ENCODE measurements at regions of chr19 and their contacts with region 1.

Region 1: DNA sequence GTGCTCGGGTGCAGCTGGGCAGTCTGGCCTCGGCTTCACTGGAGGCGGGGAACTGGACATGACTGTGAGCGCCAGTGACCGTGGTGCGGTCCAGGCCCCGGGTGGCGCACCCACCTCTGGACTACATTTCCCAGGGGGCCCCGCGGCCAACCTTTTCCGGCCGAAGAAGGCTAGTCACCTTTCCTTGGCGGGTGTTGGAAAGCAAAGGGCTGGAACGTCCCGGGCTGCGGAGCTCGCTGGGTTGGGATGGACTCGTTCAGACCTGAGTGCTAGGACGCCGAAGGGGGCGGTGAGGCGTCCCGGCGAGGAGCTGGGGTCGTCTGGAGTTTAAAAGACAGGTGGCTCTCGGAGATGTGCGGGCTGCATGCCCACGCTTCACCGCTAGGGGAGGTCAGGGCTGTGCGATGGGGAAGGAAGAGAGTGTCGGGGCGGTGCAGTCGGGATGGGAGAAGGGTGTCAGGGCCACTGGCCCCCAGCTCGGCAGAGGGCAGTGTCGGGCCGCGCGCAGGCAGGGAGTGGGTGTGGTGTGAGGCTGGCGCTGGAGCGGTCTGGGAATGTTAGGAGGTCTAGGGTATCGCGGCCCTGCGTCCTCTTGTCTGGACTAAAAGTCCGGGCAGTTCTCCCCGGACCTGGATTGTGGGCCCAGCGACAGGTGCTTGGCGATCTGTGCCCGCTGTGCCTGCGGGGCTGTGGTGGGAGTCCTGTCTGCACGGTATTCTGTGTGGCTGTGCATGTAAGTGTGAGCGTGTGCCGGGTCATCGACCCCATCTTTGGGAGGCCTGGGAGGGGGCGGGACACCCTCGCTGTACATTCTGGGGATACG is 57.1 kb downstream of the ZNF568 start:
- DNase-seq: peak; percentile 93 to 96
- ATAC-seq: peak; percentile 99
- H3K4me3 ChIP-seq: peak overlapping the region; percentile 63 to 75
- H3K27ac ChIP-seq: peak overlapping the region in 1 of 2 donors; percentile 74
- H3K4me1 ChIP-seq: no peaks in the 10 kb centered on the region
- H3K27me3 ChIP-seq: no peaks in the 10 kb centered on the region

Region 2: DNA sequence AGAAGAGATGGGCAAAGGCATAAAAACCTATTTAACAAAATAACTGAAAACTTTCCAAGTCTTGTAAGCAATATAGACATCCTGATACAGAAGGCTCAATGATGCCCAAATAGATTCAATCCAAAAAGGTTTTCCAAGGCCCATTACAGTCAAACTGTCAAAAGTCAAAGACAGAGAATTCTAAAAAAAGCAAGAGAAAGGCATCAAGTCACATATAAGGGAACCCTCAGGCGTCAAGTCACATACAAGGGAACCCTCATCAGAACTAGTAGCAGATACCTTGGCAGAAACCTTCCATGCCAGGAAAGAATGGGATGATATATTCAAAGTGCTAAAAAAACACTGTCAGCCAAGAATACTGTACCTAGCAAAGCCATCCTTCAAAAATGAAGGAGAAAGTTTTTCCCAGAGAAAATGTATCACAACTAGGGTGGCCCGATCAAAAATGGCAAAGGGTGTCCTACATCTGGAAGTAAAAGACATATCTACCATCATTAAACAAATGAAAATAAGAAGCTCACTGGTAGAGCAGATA is 78.3 kb before region 1 on chr19:
- intact Hi-C with region 1: no loop called
- DNase-seq: no peak
- ATAC-seq: no peak
- H3K4me3 ChIP-seq: no peak overlapping the region
- H3K27ac ChIP-seq: no peak overlapping the region
- H3K4me1 ChIP-seq: no peaks in the 10 kb centered on the region
- H3K27me3 ChIP-seq: no peaks in the 10 kb centered on the region

Region 3: GRCh38 chr19:36915992-36916830 is 57.0 kb before region 1 on chr19 and contains the starts of genes ZNF568 and ZNF829:
- intact Hi-C with region 1: loop called in 1 of 2 experiments (anchors 5 kb)
- DNase-seq: peak; percentile 94 to 97
- ATAC-seq: peak; percentile 96
- H3K4me3 ChIP-seq: peak within 1 kb of the TSS; percentile 77 to 81
- H3K27ac ChIP-seq: peak within 1 kb of the TSS; percentile 45 to 97
- H3K4me1 ChIP-seq: no peaks in the 10 kb centered on the region
- H3K27me3 ChIP-seq: no peaks in the 10 kb centered on the region
- total RNA-seq, gene ZNF568: 14.0 to 15.8 TPM
- total RNA-seq, gene ZNF829: 3.1 to 3.5 TPM

Region 4: DNA sequence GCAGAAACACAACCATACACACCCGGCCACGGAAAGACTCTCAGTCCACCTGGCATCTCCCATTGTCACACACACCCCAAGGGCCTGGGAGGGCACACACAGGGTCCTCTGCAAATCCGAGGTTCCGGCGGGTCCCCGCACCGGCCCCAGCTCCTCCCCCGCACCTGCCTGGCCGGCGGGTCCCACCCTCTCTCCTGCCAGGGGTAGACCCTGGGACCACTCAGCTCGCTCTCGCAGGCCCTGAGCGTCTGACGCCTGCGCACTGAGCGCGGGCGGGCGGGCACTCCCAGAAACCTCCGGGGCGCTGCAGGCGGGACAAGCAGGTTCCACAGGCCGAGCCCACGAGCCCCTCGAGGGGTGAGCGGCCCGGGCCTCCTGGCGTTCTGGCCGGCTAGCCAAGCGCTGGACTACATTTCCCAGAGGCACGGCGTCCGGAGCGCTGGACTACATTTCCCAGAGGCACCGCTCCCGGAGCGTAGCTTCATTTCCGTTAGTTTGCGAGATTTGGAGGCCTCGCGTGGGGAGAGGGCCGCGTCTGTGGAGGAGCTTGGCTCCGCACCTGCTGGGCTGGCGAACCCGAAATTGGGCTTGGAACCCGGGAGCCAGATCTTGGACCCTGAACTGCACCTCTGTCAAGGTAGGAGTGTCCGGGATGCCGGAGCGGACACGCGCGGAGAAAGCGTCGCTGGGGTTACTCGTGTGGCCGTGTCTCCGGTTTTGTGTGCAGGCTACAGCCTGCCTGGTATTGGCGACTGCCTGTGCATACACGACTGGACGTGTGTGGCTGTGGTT is 104.9 kb after region 1 on chr19 and contains the start of gene ZNF420:
- intact Hi-C with region 1: loop called in 1 of 2 experiments (anchors 5 kb)
- DNase-seq: peak; percentile 96 to 97
- ATAC-seq: peak; percentile 100
- H3K4me3 ChIP-seq: peak within 1 kb of the TSS; percentile 46 to 91
- H3K27ac ChIP-seq: peak within 1 kb of the TSS in 1 of 2 donors; percentile 55
- H3K4me1 ChIP-seq: peaks cover 4 to 7% of the 10 kb centered on the region in 2 donors
- H3K27me3 ChIP-seq: no peaks in the 10 kb centered on the region
- total RNA-seq, gene ZNF420: 9.2 to 11.8 TPM

Region 5: DNA sequence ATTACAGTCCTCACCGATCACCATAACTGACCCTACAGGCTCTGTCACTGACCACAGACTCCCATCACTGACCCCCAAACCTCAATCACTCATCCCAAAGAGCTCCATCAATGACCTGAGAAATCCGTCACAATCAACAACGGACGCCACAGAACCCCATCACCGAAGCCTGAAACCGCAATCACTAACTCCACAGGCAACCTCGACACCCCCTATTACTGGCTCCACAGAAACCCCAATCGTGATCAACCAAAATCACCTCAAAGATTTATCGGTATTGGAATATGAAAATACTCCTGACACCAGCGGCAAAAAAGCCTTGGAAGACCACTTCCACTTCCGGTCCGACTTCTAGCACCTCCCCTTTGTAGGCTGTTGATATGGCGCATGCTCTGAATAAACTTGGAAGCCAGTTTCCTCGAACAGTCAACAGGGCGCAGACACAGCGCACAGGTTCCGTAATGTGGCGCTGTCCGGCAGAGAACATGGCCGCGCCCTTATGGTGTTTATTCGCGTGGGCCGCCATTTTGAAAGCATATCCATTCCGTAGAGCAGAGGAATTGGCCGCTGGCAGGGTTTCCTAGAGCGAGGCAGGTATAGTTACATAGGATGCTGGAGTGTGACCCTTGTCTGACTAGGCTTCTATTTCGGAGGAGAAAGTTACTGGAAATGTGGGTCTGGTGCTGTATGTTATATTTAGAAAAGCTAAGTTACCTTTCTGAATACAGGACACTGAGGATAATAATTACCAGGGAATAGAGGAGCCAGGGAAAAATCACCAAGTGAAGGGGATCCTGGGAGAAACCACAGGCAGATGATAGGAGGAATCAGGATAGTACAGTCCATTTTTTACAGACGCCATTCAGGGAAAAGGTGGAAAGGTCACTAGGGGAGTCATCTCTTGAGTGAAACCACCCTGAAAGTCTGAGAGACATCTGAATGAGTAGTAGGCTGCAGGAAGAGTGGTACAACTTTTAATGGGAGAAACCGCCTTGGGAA is 199.4 kb after region 1 on chr19 and contains the start of gene ZNF585A:
- intact Hi-C with region 1: loop called in 1 of 2 experiments (anchors 5 kb)
- DNase-seq: peak; percentile 95
- ATAC-seq: peak; percentile 100
- H3K4me3 ChIP-seq: peak within 1 kb of the TSS; percentile 63 to 100
- H3K27ac ChIP-seq: peak within 1 kb of the TSS in 1 of 2 donors; percentile 64
- H3K4me1 ChIP-seq: no peaks in the 10 kb centered on the region
- H3K27me3 ChIP-seq: no peaks in the 10 kb centered on the region
- total RNA-seq, gene ZNF585A: 8.6 to 15.1 TPM

Region 6: DNA sequence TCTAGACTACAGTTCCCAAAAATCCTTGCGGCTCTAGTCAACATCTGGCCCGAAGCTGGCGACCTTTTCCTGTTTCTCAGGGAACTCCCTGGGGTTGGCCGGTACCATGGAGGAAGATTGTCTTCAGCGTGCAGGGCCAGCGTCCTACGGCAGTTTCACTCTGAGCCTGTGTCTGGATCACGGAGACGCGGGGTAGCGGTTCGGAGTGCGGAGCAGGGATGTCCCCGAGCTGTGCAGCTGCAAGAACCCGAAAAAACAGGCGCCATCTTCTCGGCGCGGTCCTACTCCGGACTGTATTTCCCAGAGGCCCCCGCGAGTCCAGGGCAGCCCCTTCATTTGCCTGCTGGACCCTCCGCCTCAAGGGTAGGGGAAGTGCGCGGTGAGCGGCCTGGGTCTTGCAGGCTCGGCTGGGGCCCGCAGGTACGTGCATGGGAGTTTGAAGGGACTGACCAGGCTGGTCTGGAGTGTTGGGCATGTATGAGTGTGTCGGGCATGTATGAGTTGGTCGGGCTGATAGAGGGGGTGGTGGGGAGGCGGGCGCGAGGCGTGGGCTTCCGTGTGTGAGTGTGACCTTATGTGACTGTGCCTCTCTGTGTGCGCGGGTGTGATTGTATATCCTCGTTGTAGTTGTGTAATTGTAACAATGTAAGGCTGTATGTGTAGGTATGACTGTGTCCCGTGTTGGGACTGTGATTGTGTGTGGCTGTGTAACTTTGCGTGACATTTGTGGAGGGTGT is 244.8 kb after region 1 on chr19 and contains the start of gene ZNF383:
- intact Hi-C with region 1: loop called in 1 of 2 experiments (anchors 5 kb)
- DNase-seq: peak; percentile 92 to 95
- ATAC-seq: peak; percentile 98
- H3K4me3 ChIP-seq: peak within 1 kb of the TSS; percentile 84 to 88
- H3K27ac ChIP-seq: peak within 1 kb of the TSS in 1 of 2 donors; percentile 85
- H3K4me1 ChIP-seq: no peaks in the 10 kb centered on the region
- H3K27me3 ChIP-seq: no peaks in the 10 kb centered on the region
- total RNA-seq, gene ZNF383: 10.0 to 16.1 TPM

Region 7: DNA sequence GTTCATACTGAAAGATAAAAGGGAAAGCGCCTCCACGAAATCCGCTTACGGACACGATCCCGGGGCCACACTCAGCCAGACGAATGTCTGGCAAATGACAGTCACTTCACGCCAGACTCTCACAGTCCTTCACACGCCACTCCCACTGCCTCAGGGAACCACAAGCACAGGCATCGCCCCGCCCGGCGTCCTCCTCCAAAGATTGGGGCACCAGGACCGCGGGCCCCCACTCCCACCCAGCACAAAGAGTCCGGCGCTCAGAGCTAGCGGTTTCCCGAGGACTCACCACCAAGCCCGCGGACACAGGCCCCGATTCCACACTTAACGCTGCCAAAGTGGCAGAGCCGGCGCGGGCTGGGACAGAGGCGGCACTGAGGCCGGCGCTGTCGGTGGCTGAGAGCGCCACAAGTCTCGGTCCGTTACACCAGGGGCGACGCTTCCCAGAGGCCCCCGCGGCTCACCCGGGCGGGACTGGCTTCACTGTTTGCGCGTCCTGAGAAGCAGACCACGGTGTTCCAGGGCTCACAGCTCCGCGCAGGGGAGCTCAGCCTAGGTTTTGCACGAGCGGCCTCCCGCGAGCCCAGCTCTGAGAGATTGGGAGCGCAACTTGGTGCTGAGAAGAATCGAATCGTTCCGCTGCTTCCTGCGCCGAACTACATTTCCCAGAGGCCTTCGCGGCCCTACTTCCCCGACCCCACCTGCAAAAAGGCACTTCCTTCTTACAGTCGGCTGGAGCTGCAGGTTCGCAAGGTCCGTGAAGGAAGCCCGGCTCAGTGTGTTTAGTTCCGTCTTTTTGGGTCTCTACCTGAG is 493.8 kb after region 1 on chr19 and contains the start of gene ZNF569:
- intact Hi-C with region 1: loop called in 1 of 2 experiments (anchors 5 kb)
- DNase-seq: peak; percentile 94
- ATAC-seq: peak; percentile 93
- H3K4me3 ChIP-seq: peak within 1 kb of the TSS; percentile 61 to 80
- H3K27ac ChIP-seq: peak within 1 kb of the TSS in 1 of 2 donors; percentile 68
- H3K4me1 ChIP-seq: no peaks in the 10 kb centered on the region
- H3K27me3 ChIP-seq: no peaks in the 10 kb centered on the region
- total RNA-seq, gene ZNF569: 5.4 to 6.7 TPM